Activated naive CD4-positive, alpha-beta T cell treated with anti-CD3 and anti-CD28 coated beads for 36 hours (primary cell): ENCODE measurements at regions of chr1 and their contacts with region 1.

Region 1: DNA sequence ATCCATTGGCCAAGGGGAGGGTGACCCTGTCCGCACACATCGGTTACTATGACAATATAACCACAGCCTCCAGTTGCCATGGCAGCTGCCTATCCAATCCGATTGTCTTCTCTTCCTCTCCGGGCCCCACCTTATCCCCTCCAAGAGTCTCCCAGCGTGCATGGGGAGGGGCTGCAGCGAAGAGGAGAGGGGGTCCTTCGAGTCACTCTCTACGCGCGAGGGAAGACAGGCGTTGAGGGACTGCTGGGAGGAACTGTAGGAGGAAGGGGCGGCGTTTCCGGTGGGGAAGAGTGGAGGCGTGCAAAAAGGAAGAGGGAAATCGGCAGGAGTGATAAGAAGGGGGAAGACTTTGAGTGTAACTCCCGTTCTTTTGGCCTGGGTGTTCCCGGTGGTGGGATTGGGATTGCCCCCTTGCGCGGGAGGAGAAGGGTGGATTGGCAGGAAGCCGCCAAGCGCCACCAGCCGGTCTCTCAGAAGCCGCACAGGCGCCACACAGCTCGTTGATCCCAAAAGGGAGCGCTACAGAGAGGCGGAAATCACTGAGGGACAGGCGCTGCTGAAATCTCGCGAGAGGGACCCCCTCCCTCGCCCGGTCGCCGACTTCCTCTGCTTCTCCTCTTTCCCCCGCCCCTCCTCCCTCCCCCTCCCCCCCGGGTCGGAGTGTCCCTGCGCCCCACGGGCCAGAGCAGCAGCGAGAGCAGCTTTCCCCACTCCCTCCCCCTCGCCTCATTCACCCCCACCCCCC is 384 bp upstream of the SMG7 start:
- DNase-seq: peak; percentile 98
- H3K4me3 Mint-ChIP-seq: peak overlapping the region; percentile 81
- H3K27ac Mint-ChIP-seq: peak overlapping the region; percentile 99
- H3K4me1 Mint-ChIP-seq: peaks cover 24% of the 10 kb centered on the region
- H3K27me3 Mint-ChIP-seq: no peaks in the 10 kb centered on the region

Region 2: DNA sequence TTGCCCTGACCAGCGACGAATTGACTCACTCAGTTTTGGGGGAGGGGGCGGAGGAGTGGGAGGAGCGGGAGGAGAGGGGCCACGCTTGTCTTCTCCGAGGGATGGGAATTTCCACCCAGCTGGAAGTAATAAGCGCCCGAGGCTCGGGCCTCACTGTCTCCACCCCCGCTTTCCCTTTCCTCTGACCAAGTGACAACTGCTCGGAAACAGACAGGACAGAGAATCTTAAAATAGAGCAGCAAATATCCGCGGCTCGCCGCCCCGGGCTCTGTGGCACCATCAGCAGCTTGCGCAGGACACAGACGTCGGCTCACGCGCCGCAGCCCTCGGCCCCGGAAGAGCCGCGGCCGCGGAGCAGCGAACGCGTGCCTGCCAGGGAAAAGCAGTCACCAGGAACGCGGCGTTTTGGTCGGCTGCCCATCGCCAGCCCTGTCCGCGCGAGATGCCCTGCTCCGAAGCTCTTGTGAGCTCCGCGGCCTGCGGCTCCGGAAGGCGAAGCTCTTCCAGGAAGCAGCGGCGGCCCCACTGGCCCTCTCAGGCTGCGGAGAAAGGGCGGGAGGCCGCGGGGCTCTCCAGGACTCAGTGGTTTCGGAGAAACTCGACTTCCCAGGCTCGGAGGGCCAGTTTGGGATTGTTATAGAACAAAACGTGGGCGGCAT is 857.0 kb before region 1 on chr1:
- CTCF ChIA-PET with region 1: no interaction called
- intact Hi-C with region 1: loop called (anchors 5 kb)
- DNase-seq: peak; percentile 72
- H3K4me3 Mint-ChIP-seq: peak overlapping the region; percentile 73
- H3K27ac Mint-ChIP-seq: peak overlapping the region; percentile 84
- H3K4me1 Mint-ChIP-seq: peaks cover 56% of the 10 kb centered on the region
- H3K27me3 Mint-ChIP-seq: peaks cover 5% of the 10 kb centered on the region

Region 3: DNA sequence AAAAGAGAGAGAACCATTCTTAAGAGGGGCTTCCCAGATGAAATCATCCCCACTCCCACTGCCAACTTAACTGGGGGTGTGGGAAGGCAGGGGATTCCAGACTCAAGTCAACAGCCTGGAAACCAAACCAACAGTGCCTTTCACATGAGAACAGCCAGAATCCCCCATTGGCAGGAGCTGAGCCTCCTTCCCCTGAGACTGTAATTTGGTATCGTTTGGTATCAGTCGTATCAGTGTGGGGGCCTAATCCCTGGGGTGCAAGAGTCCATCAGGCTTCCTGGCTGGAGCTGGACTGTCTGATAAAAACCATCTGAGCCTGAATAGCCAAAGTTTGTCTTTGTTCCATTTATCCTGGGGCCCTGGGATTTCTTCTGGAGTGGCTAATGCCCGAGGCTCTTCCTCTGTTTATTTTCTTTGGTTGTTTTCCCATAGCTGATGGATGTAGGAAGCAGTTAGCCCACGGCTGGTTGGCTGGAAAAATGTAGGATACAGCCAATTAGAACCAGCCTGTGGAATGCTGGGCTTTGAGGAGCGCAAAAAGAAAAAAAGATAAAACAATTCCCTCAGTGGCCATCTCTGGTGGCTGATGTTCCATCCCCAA is 201.3 kb before region 1 on chr1:
- CTCF ChIA-PET with region 1: no interaction called
- intact Hi-C with region 1: no loop called
- DNase-seq: no peak
- H3K4me3 Mint-ChIP-seq: no peak overlapping the region
- H3K27ac Mint-ChIP-seq: no peak overlapping the region
- H3K4me1 Mint-ChIP-seq: no peaks in the 10 kb centered on the region
- H3K27me3 Mint-ChIP-seq: peaks cover 3% of the 10 kb centered on the region

Region 4: GRCh38 chr1:183498342-183498991 is 26.6 kb after region 1 on chr1:
- CTCF ChIA-PET with region 1: interaction called, 3 read pairs
- intact Hi-C with region 1: loop called (anchors 1 kb)
- DNase-seq: peak; percentile 22
- H3K4me3 Mint-ChIP-seq: peak overlapping the region; percentile 2
- H3K27ac Mint-ChIP-seq: peak overlapping the region; percentile 75
- H3K4me1 Mint-ChIP-seq: peaks cover 62% of the 10 kb centered on the region
- H3K27me3 Mint-ChIP-seq: no peaks in the 10 kb centered on the region

Region 5: DNA sequence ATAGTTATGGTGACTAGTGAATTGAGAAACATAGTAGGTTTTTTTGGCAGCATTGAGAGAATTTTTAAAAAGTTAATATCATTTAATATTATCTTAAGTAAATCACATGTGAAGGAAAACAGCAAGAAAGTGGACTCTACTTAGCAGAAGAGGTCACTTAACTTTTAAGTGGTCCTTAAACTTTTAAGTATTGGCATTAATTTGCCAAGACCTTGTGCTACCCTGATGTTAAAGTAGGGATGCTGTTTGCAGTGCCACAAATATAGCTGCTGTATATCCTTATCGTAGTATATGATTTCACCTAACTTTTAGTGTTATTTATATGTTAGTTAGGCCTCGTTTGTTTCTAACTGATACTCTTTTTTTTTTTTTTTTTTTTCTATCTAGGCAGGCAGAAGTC is 40.5 kb after region 1 on chr1:
- CTCF ChIA-PET with region 1: no interaction called
- intact Hi-C with region 1: no loop called
- DNase-seq: no peak
- H3K4me3 Mint-ChIP-seq: no peak overlapping the region
- H3K27ac Mint-ChIP-seq: no peak overlapping the region
- H3K4me1 Mint-ChIP-seq: peaks cover 18% of the 10 kb centered on the region
- H3K27me3 Mint-ChIP-seq: no peaks in the 10 kb centered on the region

Region 6: DNA sequence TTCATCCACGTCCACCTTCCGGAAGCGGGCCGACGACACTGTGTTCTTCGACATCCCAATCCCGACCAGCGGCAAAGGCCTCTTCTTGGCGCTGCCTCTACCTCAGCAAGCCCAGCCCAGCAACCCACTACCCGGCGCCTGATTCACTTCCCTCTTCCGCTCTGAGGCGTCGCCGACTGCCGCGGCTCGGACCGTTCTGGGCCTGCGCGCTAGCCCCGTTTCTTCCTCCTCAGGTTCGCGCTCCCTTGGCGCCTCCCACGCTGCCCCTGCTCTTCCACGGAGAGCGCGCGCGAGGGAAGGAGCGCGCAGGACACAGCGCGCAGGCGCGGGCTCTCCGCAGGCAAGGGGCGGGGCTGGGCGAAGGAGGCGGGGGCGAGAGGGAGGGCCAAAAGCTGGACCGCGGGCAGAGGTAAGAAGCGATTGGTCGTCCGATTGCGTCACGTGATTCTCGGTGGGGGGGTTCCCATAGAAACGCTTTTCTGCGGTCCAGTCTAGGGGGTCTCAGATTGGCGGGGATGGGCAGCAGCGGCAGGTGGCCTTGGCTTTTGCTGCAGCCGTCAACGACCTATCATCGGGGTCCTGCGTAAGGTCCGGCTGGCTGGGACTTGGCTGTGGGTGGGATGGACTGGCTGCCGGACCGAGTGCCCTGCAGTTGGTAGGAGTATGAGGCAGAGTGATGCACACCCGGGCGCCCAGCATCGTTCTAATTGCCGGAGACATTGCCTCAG is 163.9 kb after region 1 on chr1 and contains the start of gene ARPC5:
- CTCF ChIA-PET with region 1: interaction called, 3 read pairs
- intact Hi-C with region 1: loop called (anchors 1 kb)
- DNase-seq: peak; percentile 97
- H3K4me3 Mint-ChIP-seq: peak within 1 kb of the TSS; percentile 98
- H3K27ac Mint-ChIP-seq: peak within 1 kb of the TSS; percentile 99
- H3K4me1 Mint-ChIP-seq: peaks cover 27% of the 10 kb centered on the region
- H3K27me3 Mint-ChIP-seq: no peaks in the 10 kb centered on the region
- total RNA-seq, gene ARPC5: 162 to 164 TPM

Region 7: GRCh38 chr1:183915625-183916510 is 444.0 kb after region 1 on chr1:
- CTCF ChIA-PET with region 1: no interaction called
- intact Hi-C with region 1: loop called (anchors 1 kb)
- DNase-seq: peak; percentile 86
- H3K4me3 Mint-ChIP-seq: no peak overlapping the region
- H3K27ac Mint-ChIP-seq: peak overlapping the region; percentile 6
- H3K4me1 Mint-ChIP-seq: peaks cover 20% of the 10 kb centered on the region
- H3K27me3 Mint-ChIP-seq: no peaks in the 10 kb centered on the region

Region 8: GRCh38 chr1:184163674-184164465 is 692.0 kb after region 1 on chr1:
- CTCF ChIA-PET with region 1: no interaction called
- intact Hi-C with region 1: loop called (anchors 2 kb)
- DNase-seq: no peak
- H3K4me3 Mint-ChIP-seq: no peak overlapping the region
- H3K27ac Mint-ChIP-seq: no peak overlapping the region
- H3K4me1 Mint-ChIP-seq: no peaks in the 10 kb centered on the region
- H3K27me3 Mint-ChIP-seq: peaks cover 1% of the 10 kb centered on the region